Endothelial cell of umbilical vein (primary cell): ENCODE measurements at regions of chr4 and their contacts with region 1.

Region 1: GRCh38 chr4:79325864-79326328 is at the start of gene NAA11:
- DNase-seq: no peak
- H3K4me3 ChIP-seq: no peak within 1 kb of the TSS
- H3K27ac ChIP-seq: no peak within 1 kb of the TSS
- H3K4me1 ChIP-seq: no peaks in the 10 kb centered on the region
- H3K27me3 ChIP-seq: no peaks in the 10 kb centered on the region
- CTCF ChIP-seq: no peak
- POLR2A ChIP-seq: no peak
- total RNA-seq, gene NAA11: not detected in 2 replicates

Region 2: DNA sequence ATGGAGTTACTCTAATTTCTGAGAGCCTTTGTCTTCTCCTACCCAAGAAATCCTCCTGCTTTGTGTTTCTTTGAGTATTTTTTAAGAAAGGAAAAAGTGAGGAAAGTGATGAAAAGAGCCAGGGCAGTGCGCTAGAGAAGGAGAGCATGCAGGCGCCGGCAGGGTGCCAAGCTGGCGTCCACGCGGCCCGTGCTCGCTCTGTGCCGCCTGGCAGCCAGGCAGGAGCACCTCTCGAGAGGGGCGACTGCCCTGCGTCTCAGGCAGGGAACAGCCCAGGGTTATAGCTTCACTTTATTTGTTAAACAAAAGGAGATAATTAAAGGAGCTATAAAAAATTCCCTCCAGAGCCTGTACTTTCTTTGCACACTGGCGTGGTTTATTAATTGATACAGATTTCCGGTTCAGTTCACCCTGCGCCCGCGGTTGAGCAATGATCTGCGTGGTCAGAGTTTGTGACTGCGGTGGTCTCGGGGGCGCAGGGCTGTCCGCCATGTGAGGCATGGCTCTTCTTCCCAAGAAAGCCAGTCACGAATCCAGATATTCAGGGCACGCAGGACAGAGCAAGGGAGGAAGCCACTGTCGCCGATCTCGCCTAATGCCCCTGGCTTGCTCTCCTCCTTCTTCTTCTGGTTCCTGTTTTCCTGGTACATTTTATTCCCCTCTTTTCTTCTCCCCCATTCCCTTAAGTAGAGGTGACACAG is 275.9 kb before region 1 on chr4:
- CTCF ChIA-PET with region 1: no interaction called
- POLR2A ChIA-PET with region 1: no interaction called
- dilution Hi-C with region 1: no loop called
- intact Hi-C with region 1: loop called (anchors 5 kb)
- DNase-seq: no peak
- H3K4me3 ChIP-seq: no peak overlapping the region
- H3K27ac ChIP-seq: no peak overlapping the region
- H3K4me1 ChIP-seq: no peaks in the 10 kb centered on the region
- H3K27me3 ChIP-seq: no peaks in the 10 kb centered on the region
- CTCF ChIP-seq: no peak
- POLR2A ChIP-seq: no peak

Region 3: GRCh38 chr4:79576429-79576753 is 250.5 kb after region 1 on chr4:
- CTCF ChIA-PET with region 1: no interaction called
- POLR2A ChIA-PET with region 1: no interaction called
- dilution Hi-C with region 1: no loop called
- intact Hi-C with region 1: no loop called
- DNase-seq: peak; percentile 39
- H3K4me3 ChIP-seq: no peak overlapping the region
- H3K27ac ChIP-seq: no peak overlapping the region
- H3K4me1 ChIP-seq: no peaks in the 10 kb centered on the region
- H3K27me3 ChIP-seq: peaks cover 0 to 2% of the 10 kb centered on the region in 2 experiments
- CTCF ChIP-seq: peak in 1 of 2 donors; percentile 23
- POLR2A ChIP-seq: no peak